ENCODE measurements at regions of chr10 and their contacts with region 1.

Region 1: GRCh38 chr10:11586170-11586569 is 25.3 kb downstream of the USP6NL start:
- DNase-seq: no peak
- ATAC-seq: no peak
- H3K4me3 Mint-ChIP-seq: no peak overlapping the region
- H3K27ac Mint-ChIP-seq: peak overlapping the region; percentile 59
- H3K4me1 Mint-ChIP-seq: peaks cover 71% of the 10 kb centered on the region
- H3K27me3 Mint-ChIP-seq: no peaks in the 10 kb centered on the region
- CTCF ChIP-seq: no peak

Region 2: DNA sequence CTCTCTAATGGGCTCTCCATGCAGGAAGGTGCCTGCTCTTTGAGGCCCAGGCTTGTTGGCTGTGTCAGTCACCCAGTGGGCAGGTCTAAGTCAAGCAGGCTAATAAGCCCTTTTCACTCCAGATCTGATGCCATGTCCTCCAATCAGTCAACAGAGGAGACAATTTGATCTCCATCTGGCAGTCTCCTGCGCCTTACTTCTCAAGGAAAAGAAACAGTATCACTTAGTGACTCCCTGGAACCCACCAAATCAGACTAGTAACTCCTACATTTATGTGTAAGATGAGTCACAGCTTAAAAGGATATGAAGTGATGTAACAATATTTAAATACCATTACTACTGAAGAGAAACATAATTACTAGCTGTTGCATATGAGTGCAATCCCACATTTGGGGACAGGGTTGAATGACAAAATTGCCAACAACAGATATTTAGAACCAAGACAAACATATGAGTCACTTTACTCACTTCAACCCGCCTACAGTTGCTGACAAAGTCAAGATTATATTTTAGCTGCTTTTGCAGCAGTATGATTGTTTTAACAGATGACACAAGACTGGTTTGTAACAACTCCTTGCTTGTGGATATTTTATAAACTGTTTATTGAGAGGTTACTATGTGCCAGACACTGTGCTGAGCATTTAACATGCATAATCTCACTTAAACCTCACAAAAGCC is 46.8 kb before region 1 on chr10:
- CTCF ChIA-PET with region 1: no interaction called
- POLR2A ChIA-PET with region 1: no interaction called
- intact Hi-C with region 1: no loop called
- DNase-seq: no peak
- ATAC-seq: peak; percentile 24
- H3K4me3 Mint-ChIP-seq: peak overlapping the region; percentile 50
- H3K27ac Mint-ChIP-seq: peak overlapping the region; percentile 76
- H3K4me1 Mint-ChIP-seq: peaks cover 81% of the 10 kb centered on the region
- H3K27me3 Mint-ChIP-seq: no peaks in the 10 kb centered on the region
- CTCF ChIP-seq: no peak

Region 3: DNA sequence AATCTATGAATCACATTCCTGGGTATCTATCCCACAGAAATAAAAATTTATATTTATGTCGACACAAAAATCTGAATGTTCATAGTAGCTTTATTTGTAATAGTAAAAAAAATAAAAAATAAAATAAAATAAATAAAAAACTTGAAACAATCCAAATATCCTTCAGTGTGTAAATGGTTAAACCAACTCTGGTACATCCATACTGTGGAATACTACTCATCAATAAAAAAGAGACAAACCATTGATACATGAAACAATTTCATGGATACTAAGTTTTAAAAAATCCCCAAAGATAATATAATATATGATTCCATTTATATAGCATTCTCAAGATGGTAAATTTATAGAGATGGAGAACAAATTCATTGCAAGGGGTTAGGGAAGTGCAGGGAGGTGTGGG is 23.3 kb before region 1 on chr10:
- CTCF ChIA-PET with region 1: no interaction called
- POLR2A ChIA-PET with region 1: no interaction called
- intact Hi-C with region 1: no loop called
- DNase-seq: no peak
- ATAC-seq: no peak
- H3K4me3 Mint-ChIP-seq: no peak overlapping the region
- H3K27ac Mint-ChIP-seq: peak overlapping the region; percentile 83
- H3K4me1 Mint-ChIP-seq: peaks cover 92% of the 10 kb centered on the region
- H3K27me3 Mint-ChIP-seq: no peaks in the 10 kb centered on the region
- CTCF ChIP-seq: no peak

Region 4: GRCh38 chr10:11678074-11678793 is 92.1 kb after region 1 on chr10:
- CTCF ChIA-PET with region 1: no interaction called
- POLR2A ChIA-PET with region 1: interaction called, 12 read pairs
- intact Hi-C with region 1: no loop called
- DNase-seq: peak; percentile 51
- ATAC-seq: peak; percentile 80
- H3K4me3 Mint-ChIP-seq: peak overlapping the region; percentile 77
- H3K27ac Mint-ChIP-seq: peak overlapping the region; percentile 94
- H3K4me1 Mint-ChIP-seq: peaks cover 94% of the 10 kb centered on the region
- H3K27me3 Mint-ChIP-seq: no peaks in the 10 kb centered on the region
- CTCF ChIP-seq: no peak

Measured in activated B cell treated with CpG ODN at 0.5 μM for 24 hours (primary cell).